Posterior cingulate gyrus (tissue), 11 donors: ENCODE measurements at regions of chr2 and their contacts with region 1.

Region 1: DNA sequence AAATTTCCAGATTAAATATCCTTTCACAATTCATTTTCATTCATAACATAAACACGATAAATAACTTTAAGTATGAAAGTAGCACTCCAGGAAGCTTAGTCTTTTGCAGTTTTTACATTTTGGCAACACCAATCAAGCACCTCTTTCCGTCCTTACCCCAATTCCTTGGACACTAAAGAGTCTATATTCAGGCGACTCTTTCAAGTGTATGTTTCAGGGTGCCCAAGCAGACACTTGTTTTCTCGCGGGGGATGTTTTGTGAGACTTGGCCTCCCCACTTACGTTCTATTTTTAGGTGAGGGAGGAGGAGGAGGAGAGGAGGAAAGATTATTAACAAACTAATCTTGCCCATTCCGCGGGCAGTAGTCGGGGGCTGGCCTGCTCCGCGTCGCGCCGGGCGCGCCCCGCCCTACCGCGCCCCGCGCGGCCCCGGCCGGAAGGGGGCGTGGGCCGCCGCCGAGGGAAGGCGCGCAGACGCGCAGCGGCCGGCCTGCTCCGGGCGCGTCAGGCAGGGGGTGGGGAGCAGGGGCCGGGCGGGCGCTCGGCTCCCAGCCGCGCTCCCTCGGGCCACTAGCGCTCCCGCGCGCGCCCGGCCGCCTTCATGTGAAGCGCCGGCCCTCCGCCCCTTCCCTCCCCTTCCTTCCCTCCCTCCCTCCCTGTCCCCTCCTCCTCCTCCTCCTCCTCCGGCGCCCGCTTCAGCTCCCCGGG is at the start of gene ITPRID2:
- DNase-seq: peak; percentile 61 to 95 (median 70)

Region 2: DNA sequence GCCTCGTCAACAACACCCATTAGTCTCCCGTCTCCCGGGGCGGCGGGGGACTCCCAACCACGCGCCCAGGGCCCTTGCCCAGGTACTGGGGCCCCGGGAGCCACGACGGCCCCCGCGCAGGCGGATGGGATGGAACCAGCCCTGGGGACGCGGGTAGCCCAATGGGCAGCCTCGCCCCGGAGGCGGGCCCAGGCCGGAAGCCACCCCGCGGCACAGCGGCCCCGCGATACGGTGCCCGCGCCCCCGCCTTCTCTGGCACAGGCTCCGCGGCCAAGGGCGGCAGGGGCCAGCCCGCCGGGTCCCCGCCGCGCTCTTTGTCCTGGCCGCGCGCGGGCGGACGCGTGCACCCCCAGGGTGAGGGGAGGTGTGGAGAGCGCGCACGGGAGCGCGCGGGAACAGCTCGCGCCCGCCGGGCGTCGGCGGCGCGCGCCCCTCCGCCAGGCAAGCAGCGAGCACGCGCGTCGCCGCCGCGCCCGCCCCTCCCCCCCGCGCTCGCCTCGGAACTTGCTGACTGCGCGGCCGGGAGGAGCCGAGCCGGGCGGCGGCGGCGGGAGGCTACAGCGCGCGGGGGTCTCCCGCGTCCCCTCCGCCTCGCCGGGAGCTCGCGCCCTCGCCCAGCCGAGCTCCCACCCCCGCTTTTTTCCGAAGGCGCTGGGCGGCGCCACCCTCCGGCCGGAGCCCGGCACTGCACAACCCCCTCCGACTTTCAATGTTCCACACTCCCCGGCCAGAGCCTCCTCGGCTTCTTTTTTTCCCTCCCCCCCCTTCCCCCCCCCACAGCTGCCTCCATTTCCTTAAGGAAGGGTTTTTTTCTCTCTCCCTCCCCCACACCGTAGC is 911.1 kb before region 1 on chr2 and contains the start of gene UBE2E3:
- intact Hi-C with region 1: loop called (anchors 5 kb)
- DNase-seq: peak; percentile 69 to 97 (median 78)

Region 3: DNA sequence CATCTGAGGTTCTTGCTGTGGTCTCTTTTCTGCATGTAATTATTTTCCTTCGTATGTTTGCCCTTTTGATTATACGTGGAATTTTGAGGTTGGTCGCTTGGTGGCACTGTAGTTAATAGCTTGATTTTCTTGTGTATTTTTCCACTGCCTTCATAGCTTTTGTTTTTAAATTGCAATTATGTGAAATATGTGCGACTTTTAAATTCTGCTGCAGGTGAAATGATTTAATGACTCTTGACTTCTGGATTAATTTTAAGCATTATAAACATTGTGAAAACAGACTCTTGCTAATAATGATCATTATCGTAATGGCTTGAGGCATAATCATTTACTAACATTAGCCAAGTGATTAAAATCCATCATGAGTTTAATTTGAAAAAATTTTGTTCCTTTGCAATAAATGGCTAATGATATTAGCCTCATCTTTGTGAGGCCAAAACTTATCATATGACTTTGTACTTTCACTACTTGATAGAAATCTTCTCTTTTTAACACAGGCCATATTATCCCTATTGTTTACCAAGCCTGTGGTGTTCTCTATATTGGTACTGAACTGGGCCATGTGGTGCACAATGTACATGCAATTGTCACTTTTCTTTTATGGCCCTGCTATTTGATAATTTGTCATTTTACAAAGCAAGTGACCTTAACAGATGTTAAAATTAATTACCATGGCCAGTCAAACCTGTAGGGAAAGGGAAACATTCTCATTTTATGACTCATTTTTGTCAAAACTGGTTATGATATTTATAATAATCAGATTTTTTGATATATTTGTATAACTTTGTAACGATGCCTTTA is 148.3 kb before region 1 on chr2:
- intact Hi-C with region 1: loop called (anchors 5 kb)
- DNase-seq: peak in 3 of 10 donors; percentile 17 to 37 (median 25)

Region 4: DNA sequence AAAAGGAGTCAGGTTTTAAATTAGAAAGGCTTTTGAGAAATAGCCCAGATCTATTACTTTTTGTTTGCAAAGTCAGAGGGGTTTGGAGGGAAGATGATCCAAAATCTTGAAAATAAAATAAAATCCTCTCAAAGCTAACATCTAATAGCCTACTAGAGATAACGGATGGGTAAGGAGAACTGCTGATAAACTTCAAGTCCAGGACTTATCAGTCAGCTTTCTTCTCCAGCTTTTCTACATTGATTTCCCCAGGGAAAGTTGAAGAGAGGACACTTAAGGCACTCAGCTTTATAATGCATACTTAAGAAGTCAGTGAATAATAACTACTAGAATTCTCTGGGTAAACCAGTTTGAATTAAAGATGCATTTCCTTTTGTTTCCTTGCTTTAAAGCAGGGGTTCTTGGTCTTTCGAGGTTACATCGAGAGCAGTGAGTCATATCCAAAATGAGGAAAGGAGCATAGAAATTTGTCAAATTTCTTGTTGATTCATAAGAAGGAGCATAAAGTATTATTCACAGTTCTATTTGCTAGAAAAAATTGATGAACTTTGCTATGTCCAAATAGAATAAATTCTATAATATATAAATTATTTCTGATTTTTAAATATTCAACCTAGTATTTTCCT is 43.0 kb before region 1 on chr2:
- intact Hi-C with region 1: loop called (anchors 5 kb)
- DNase-seq: no peak

Region 5: DNA sequence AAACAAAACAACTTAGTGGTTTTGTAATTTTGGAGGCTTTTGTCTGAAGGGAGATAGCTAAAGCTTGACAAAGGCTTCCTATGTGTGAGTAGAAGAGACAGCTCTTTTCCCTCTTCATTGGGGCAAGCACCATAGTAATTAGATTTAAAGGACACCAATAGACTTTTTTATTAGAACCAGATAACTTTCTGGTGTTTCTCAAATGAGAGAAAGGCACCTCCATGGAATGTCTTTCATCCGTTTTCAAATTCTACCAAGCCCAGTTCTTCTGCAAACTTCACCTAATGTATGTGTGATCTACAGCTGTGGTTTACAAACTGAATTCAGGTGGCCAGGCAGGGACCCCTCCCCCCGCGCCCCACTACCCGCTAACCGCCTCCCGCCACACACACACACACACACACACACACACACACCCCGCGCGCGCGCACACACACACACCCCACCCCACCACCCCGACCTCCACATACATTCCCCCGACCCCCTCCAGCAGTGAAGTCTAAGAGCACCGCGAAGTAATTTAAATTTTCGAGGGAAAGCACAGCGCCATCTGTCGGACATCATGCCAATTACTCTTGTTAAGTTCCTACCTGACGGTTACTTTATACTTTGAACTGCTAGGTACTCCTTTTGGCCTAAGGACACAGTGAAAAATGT is 62.6 kb after region 1 on chr2:
- intact Hi-C with region 1: loop called (anchors 10 kb)
- DNase-seq: peak in 5 of 10 donors; percentile 38 to 80 (median 52)

Region 6: DNA sequence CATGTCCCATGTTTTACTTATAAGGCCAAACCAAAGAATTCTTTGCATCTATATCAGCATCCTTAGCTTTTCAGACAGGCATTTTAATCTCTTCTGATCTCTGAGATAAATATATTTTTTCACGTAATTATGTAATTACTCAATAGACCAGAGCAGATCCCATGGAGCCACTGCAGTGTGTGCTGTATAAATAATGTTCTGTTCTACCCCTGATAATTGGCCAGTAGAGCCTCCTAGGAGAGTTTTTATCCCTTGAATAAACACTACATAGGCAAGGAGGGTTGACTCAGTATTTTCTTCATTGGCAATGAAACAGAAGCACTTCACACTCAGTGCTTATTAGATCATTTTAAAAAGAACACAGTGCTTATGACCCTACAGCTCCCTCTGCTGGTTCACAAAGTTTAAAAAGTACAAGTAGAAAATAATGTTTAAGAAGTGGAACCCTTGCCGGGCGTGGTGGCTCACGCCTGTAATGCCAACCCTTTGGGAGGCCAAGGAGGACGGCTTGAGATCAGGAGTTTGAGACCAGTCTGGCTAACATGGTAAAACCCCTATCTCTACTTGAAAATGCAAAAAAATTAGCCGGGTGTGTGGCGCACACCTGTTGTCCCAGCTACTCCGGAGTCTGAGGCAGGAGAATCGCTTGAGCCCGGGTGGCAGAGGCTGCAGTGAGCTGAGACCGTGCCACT is 186.2 kb after region 1 on chr2:
- intact Hi-C with region 1: loop called (anchors 5 kb)
- DNase-seq: peak in 2 of 10 donors; percentile 12 to 75